GM12878 (cell line): ENCODE measurements at regions of chr6 and their contacts with region 1.

Region 1: GRCh38 chr6:93419304-93420162 is at the start of gene EPHA7:
- DNase-seq: no peak
- ATAC-seq: peak; percentile 88
- H3K4me3 ChIP-seq: peak within 1 kb of the TSS; percentile 36; the same call in 1 of the 2 replicates
- H3K27ac ChIP-seq: no peak within 1 kb of the TSS
- H3K4me1 ChIP-seq: no peaks in the 10 kb centered on the region
- H3K27me3 ChIP-seq: peaks cover 11 to 18% of the 10 kb centered on the region in 2 experiments; a peak in 3 of 4 replicates
- CTCF ChIP-seq: no peak
- EP300 ChIP-seq: no peak
- POLR2A ChIP-seq: no peak
- RAD21 ChIP-seq: no peak
- polyA plus RNA-seq, gene EPHA7: not detected

Region 2: GRCh38 chr6:93036835-93037234 is 382.7 kb before region 1 on chr6:
- CTCF ChIA-PET with region 1: interaction called, 20 read pairs
- POLR2A ChIA-PET with region 1: no interaction called
- RAD21 ChIA-PET with region 1: interaction called, 7 read pairs
- SMC1A ChIA-PET with region 1: interaction called, 3 read pairs
- in situ Hi-C with region 1: no loop called
- intact Hi-C with region 1: loop called (anchors 5 kb)
- DNase-seq: no peak
- ATAC-seq: peak; percentile 70
- H3K4me3 ChIP-seq: no peak overlapping the region
- H3K27ac ChIP-seq: no peak overlapping the region
- H3K4me1 ChIP-seq: no peaks in the 10 kb centered on the region
- H3K27me3 ChIP-seq: no peaks in the 10 kb centered on the region
- CTCF ChIP-seq: peak; percentile 13 to 44 (median 42); a peak in 3 of 6 replicates
- EP300 ChIP-seq: no peak
- POLR2A ChIP-seq: no peak
- RAD21 ChIP-seq: peak; percentile 35; the same call in 1 of the 2 replicates

Region 3: DNA sequence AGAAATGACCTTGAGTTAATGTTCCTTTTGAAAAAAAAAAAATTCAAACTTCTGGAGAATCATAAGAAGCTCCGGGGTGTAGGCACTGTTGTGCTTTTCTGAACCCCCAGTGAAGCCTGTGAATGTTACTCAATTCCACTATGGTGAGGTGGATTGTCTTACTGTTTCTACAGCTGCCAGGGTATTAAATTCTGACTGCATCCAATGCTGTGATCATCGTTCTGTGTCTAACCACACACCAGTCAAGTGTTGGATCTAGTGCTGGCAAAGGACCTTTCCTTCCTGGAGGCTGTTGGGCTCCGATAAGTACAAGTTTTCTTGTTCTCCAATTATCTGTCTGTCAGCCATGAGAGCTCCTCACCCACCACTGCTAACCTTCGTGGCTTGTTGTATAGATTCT is 161.8 kb after region 1 on chr6:
- CTCF ChIA-PET with region 1: no interaction called
- POLR2A ChIA-PET with region 1: no interaction called
- RAD21 ChIA-PET with region 1: no interaction called
- SMC1A ChIA-PET with region 1: no interaction called
- in situ Hi-C with region 1: no loop called
- intact Hi-C with region 1: no loop called
- DNase-seq: no peak
- ATAC-seq: no peak
- H3K4me3 ChIP-seq: no peak overlapping the region
- H3K27ac ChIP-seq: no peak overlapping the region
- H3K4me1 ChIP-seq: no peaks in the 10 kb centered on the region
- H3K27me3 ChIP-seq: no peaks in the 10 kb centered on the region
- CTCF ChIP-seq: no peak
- EP300 ChIP-seq: no peak
- POLR2A ChIP-seq: no peak
- RAD21 ChIP-seq: no peak

Region 4: GRCh38 chr6:93792746-93793145 is 373.2 kb after region 1 on chr6:
- CTCF ChIA-PET with region 1: no interaction called
- POLR2A ChIA-PET with region 1: no interaction called
- RAD21 ChIA-PET with region 1: no interaction called
- SMC1A ChIA-PET with region 1: no interaction called
- in situ Hi-C with region 1: no loop called
- intact Hi-C with region 1: no loop called
- DNase-seq: no peak
- ATAC-seq: no peak
- H3K4me3 ChIP-seq: no peak overlapping the region
- H3K27ac ChIP-seq: no peak overlapping the region
- H3K4me1 ChIP-seq: no peaks in the 10 kb centered on the region
- H3K27me3 ChIP-seq: no peaks in the 10 kb centered on the region
- CTCF ChIP-seq: no peak
- EP300 ChIP-seq: no peak
- POLR2A ChIP-seq: no peak
- RAD21 ChIP-seq: no peak